ENCODE measurements at regions of chr2 and their contacts with region 1.

Region 1: GRCh38 chr2:228657807-228658402 is 476.4 kb upstream of the SPHKAP start:
- DNase-seq: peak in 1 of 2 experiments; percentile 12
- H3K4me3 ChIP-seq: no peak overlapping the region
- H3K4me3 Mint-ChIP-seq: no peak overlapping the region
- H3K27ac Mint-ChIP-seq: no peak overlapping the region
- H3K4me1 ChIP-seq: peaks cover 15% of the 10 kb centered on the region
- H3K4me1 Mint-ChIP-seq: no peaks in the 10 kb centered on the region
- H3K27me3 ChIP-seq: no peaks in the 10 kb centered on the region
- H3K27me3 Mint-ChIP-seq: peaks cover 3% of the 10 kb centered on the region
- CTCF ChIP-seq: peak; percentile 34 to 36

Region 2: GRCh38 chr2:227890495-227891079 is 767.3 kb before region 1 on chr2:
- CTCF ChIA-PET with region 1: no interaction called
- POLR2A ChIA-PET with region 1: no interaction called
- intact Hi-C with region 1: loop called (anchors 5 kb)
- DNase-seq: peak in 1 of 2 experiments; percentile 41
- H3K4me3 ChIP-seq: no peak overlapping the region
- H3K4me3 Mint-ChIP-seq: no peak overlapping the region
- H3K27ac Mint-ChIP-seq: no peak overlapping the region
- H3K4me1 ChIP-seq: no peaks in the 10 kb centered on the region
- H3K4me1 Mint-ChIP-seq: no peaks in the 10 kb centered on the region
- H3K27me3 ChIP-seq: no peaks in the 10 kb centered on the region
- H3K27me3 Mint-ChIP-seq: no peaks in the 10 kb centered on the region
- CTCF ChIP-seq: peak; percentile 38 to 64

Region 3: GRCh38 chr2:227939271-227940027 is 718.5 kb before region 1 on chr2:
- CTCF ChIA-PET with region 1: no interaction called
- POLR2A ChIA-PET with region 1: no interaction called
- intact Hi-C with region 1: loop called (anchors 5 kb)
- DNase-seq: peak in 1 of 2 experiments; percentile 27
- H3K4me3 ChIP-seq: no peak overlapping the region
- H3K4me3 Mint-ChIP-seq: no peak overlapping the region
- H3K27ac Mint-ChIP-seq: no peak overlapping the region
- H3K4me1 ChIP-seq: no peaks in the 10 kb centered on the region
- H3K4me1 Mint-ChIP-seq: no peaks in the 10 kb centered on the region
- H3K27me3 ChIP-seq: no peaks in the 10 kb centered on the region
- H3K27me3 Mint-ChIP-seq: no peaks in the 10 kb centered on the region
- CTCF ChIP-seq: peak; percentile 52 to 54

Region 4: DNA sequence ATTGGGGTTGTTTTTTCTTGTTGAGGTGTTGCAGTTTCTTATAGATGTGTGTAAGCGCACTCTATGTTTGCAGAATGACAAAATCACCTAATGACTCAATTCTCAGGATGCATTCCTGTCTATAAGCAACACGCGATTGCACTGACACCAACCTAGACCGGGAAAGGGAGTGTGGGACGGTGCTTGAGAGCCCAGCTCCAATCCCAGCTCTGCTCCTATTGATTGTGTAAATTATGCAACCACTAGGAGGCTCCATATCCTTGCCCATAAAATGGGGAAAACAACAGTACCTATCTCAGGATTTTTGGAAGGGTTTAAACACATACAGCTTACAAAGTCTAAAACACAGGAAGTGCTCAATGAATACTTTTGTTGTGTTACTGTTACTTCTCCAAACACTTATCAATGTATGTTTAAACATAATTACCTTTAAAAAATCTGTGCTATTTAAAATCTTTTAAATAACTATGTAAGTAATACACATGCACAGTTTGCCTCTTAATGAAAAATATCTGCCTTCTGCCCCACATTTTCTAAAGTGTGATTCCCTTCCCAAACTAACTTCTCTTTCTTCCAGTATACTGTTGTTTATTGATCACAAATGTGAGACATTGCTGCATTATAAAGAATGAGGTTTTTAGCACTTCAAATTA is 608.9 kb before region 1 on chr2:
- CTCF ChIA-PET with region 1: interaction called, 3 read pairs
- POLR2A ChIA-PET with region 1: no interaction called
- intact Hi-C with region 1: loop called (anchors 1 kb)
- DNase-seq: peak; percentile 37 to 46
- H3K4me3 ChIP-seq: no peak overlapping the region
- H3K4me3 Mint-ChIP-seq: no peak overlapping the region
- H3K27ac Mint-ChIP-seq: no peak overlapping the region
- H3K4me1 ChIP-seq: no peaks in the 10 kb centered on the region
- H3K4me1 Mint-ChIP-seq: no peaks in the 10 kb centered on the region
- H3K27me3 ChIP-seq: no peaks in the 10 kb centered on the region
- H3K27me3 Mint-ChIP-seq: peaks cover 6% of the 10 kb centered on the region
- CTCF ChIP-seq: peak; percentile 26 to 63

Region 5: GRCh38 chr2:228268756-228269155 is 389.1 kb before region 1 on chr2:
- CTCF ChIA-PET with region 1: no interaction called
- POLR2A ChIA-PET with region 1: no interaction called
- intact Hi-C with region 1: no loop called
- DNase-seq: no peak
- H3K4me3 ChIP-seq: no peak overlapping the region
- H3K4me3 Mint-ChIP-seq: no peak overlapping the region
- H3K27ac Mint-ChIP-seq: no peak overlapping the region
- H3K4me1 ChIP-seq: no peaks in the 10 kb centered on the region
- H3K4me1 Mint-ChIP-seq: no peaks in the 10 kb centered on the region
- H3K27me3 ChIP-seq: no peaks in the 10 kb centered on the region
- H3K27me3 Mint-ChIP-seq: no peaks in the 10 kb centered on the region
- CTCF ChIP-seq: no peak

Region 6: DNA sequence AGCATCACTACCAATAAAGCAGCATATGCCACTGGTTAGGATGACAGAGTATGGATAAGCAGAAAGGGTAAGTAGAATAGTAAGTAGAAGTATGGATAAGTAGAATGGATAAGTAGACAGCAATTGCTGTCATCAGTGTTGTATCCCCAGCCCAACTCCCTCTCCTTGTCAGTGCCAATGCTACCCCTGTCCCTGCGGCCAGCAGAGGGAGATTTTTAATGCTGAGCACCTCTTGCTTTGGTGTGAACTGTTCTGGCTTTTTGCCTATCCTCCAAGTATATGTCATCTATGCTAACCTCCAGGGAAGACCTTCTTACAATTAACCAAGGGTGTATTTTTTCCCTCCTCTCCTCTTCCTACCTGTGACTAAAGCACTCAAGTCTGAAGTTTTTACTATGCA is 339.7 kb before region 1 on chr2:
- CTCF ChIA-PET with region 1: no interaction called
- POLR2A ChIA-PET with region 1: no interaction called
- intact Hi-C with region 1: loop called (anchors 1 kb)
- DNase-seq: peak in 1 of 2 experiments; percentile 42
- H3K4me3 ChIP-seq: no peak overlapping the region
- H3K4me3 Mint-ChIP-seq: no peak overlapping the region
- H3K27ac Mint-ChIP-seq: no peak overlapping the region
- H3K4me1 ChIP-seq: no peaks in the 10 kb centered on the region
- H3K4me1 Mint-ChIP-seq: no peaks in the 10 kb centered on the region
- H3K27me3 ChIP-seq: no peaks in the 10 kb centered on the region
- H3K27me3 Mint-ChIP-seq: peaks cover 1% of the 10 kb centered on the region
- CTCF ChIP-seq: peak; percentile 40 to 60

Region 7: GRCh38 chr2:228522276-228522675 is 135.6 kb before region 1 on chr2:
- CTCF ChIA-PET with region 1: no interaction called
- POLR2A ChIA-PET with region 1: no interaction called
- intact Hi-C with region 1: loop called (anchors 10 kb)
- DNase-seq: no peak
- H3K4me3 ChIP-seq: no peak overlapping the region
- H3K4me3 Mint-ChIP-seq: no peak overlapping the region
- H3K27ac Mint-ChIP-seq: no peak overlapping the region
- H3K4me1 ChIP-seq: no peaks in the 10 kb centered on the region
- H3K4me1 Mint-ChIP-seq: no peaks in the 10 kb centered on the region
- H3K27me3 ChIP-seq: no peaks in the 10 kb centered on the region
- H3K27me3 Mint-ChIP-seq: no peaks in the 10 kb centered on the region
- CTCF ChIP-seq: no peak

Region 8: DNA sequence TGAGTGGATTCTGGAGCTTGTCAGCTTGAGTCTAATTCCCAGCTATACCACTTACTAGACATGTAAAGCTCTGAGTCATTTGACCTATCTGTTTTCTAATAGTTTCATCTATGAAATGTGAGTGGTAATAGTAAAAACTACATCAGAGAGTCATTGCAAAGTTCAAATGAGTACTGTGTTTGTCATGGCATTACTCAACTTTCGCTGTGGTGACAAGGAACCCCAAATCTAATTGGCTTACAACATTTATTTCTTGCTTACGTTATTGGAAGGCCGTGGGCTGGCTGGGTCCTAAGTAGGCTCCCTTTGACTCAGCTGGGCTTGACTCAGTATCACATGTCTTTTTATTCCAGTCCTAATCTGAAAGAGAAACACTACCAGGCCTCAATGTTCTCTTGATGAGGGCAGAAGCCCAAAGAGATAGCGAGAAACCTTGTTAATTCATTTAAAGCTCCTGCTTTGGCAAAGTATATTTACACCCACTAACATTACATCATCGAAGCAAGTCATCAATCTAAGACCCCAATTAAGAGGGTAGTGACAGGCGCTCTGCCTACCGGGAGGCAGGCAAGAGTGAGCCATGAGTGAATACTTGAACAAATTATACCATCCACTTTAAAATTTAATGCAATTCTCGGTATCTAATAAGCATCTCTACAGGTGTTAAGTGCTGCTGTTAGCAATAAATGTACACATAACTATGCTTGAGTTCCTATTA is 44.6 kb before region 1 on chr2:
- CTCF ChIA-PET with region 1: no interaction called
- POLR2A ChIA-PET with region 1: no interaction called
- intact Hi-C with region 1: loop called (anchors 1 kb)
- DNase-seq: no peak
- H3K4me3 ChIP-seq: no peak overlapping the region
- H3K4me3 Mint-ChIP-seq: no peak overlapping the region
- H3K27ac Mint-ChIP-seq: no peak overlapping the region
- H3K4me1 ChIP-seq: no peaks in the 10 kb centered on the region
- H3K4me1 Mint-ChIP-seq: no peaks in the 10 kb centered on the region
- H3K27me3 ChIP-seq: no peaks in the 10 kb centered on the region
- H3K27me3 Mint-ChIP-seq: peaks cover 6% of the 10 kb centered on the region
- CTCF ChIP-seq: no peak

Region 9: GRCh38 chr2:228646061-228646460 is 11.8 kb before region 1 on chr2:
- CTCF ChIA-PET with region 1: no interaction called
- POLR2A ChIA-PET with region 1: no interaction called
- intact Hi-C with region 1: no loop called
- DNase-seq: no peak
- H3K4me3 ChIP-seq: no peak overlapping the region
- H3K4me3 Mint-ChIP-seq: no peak overlapping the region
- H3K27ac Mint-ChIP-seq: no peak overlapping the region
- H3K4me1 ChIP-seq: no peaks in the 10 kb centered on the region
- H3K4me1 Mint-ChIP-seq: no peaks in the 10 kb centered on the region
- H3K27me3 ChIP-seq: no peaks in the 10 kb centered on the region
- H3K27me3 Mint-ChIP-seq: no peaks in the 10 kb centered on the region
- CTCF ChIP-seq: no peak

Region 10: DNA sequence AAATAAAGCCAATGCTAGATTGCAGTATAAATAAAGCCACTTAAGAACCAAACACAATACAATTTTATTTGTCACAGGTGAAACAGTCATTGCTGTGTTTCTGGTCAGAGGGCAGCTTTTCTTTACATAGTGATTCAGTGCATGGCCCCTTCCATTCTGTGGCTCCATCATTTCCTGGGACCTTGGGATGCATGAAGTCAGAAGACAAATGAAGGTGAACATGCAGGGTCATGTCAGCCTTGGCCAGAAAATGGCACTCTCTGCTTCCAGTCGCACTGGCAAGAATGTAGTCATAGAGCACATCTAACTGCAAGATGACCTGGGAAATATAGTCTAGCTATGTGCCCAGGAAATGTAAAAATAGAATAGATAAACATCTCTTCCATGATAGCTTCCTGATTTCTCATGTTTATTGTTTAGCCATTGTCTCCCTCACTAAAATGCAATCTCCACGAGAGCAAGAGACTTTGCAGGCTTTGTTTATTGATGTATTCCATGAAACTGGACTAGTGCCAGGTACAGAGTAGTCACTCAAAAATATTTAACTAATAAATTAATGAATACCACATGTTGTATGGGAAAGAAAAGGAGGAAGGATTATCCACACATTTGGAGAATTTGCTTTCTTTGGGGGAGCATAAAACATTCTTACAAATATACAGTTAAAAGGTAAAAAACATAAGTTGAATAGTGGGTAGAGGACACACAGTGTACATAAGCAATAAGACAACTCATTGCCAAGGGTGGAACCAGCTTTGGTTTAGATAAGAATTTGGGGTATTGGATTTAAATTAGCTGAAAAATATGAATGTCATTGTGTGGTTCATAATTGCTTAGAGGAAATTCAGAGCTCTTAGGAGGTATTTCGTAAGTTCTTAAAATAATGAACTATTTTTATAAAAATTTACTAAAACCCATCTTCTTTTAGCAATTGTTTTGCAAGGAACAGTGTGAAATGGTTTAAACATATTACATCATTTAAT is 269.4 kb after region 1 on chr2:
- CTCF ChIA-PET with region 1: no interaction called
- POLR2A ChIA-PET with region 1: no interaction called
- intact Hi-C with region 1: no loop called
- DNase-seq: no peak
- H3K4me3 ChIP-seq: no peak overlapping the region
- H3K4me3 Mint-ChIP-seq: no peak overlapping the region
- H3K27ac Mint-ChIP-seq: no peak overlapping the region
- H3K4me1 ChIP-seq: no peaks in the 10 kb centered on the region
- H3K4me1 Mint-ChIP-seq: no peaks in the 10 kb centered on the region
- H3K27me3 ChIP-seq: no peaks in the 10 kb centered on the region
- H3K27me3 Mint-ChIP-seq: no peaks in the 10 kb centered on the region
- CTCF ChIP-seq: no peak